ENCODE measurements at regions of chr1 and their contacts with region 1.

Region 1: DNA sequence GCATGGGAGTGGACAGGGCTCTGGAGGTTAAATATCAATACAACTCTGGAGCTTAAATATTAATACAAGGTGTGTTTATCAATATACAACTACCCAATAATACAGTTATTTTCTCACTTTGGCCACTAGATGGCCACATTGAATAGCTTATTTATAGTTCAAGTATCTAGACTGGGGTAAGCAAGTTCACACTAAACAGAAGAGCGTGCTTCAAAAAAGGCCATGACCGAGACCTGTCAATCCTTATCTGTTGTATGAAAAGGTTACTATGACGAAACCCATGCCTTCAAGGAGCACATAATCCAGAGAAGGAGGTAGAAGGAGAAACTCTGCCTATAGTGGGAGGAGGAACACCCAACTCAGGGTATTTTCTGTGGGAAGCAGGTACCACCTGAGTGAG is 29.1 kb downstream of the CHML start:
- DNase-seq: no peak
- H3K4me3 Mint-ChIP-seq: no peak overlapping the region
- H3K27ac Mint-ChIP-seq: no peak overlapping the region
- H3K4me1 Mint-ChIP-seq: peaks cover 14% of the 10 kb centered on the region
- H3K27me3 Mint-ChIP-seq: no peaks in the 10 kb centered on the region

Region 2: DNA sequence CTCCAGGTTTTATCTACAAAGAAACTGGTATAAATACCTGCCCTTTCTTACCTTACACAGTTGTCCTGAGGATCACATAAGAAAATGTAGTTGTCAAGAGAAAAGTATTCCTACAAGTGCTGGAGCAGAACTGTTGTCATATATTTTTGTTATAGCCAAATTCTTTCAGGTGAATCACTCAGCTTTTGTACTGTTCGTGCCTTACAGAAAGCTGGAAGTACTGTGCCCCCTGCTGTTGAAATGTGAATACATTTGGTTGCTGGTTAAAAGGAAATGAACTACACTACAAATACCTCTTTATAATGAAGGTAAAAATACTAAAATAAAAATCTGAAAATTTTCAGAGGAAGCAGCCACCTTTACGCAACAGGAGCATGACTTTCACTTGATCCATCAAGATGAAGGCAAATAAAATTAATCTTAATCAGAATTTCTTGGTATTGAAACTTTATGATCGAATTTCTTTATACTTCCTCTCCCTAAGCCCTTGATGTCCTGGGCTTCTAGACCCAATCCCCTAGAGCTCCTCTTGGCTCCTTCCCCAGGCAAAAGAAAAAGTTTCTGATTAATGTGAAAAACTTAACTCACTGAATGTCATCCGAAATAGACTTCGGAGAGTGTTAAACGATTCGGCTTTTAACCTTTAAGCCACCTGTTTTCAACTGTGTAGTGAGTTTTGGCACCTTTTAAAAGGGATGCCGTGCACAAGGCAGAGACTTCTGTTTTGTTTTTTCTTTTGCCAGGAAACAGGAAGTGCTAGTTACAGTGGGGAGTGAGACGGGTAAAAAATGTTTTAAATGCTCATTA is 16.6 kb after region 1 on chr1:
- intact Hi-C with region 1: loop called (anchors 1 kb)
- DNase-seq: peak; percentile 37
- H3K4me3 Mint-ChIP-seq: peak overlapping the region; percentile 77
- H3K27ac Mint-ChIP-seq: peak overlapping the region; percentile 76
- H3K4me1 Mint-ChIP-seq: peaks cover 25% of the 10 kb centered on the region
- H3K27me3 Mint-ChIP-seq: no peaks in the 10 kb centered on the region

Region 3: GRCh38 chr1:241847796-241848685 is 237.0 kb after region 1 on chr1 and contains the start of gene EXO1:
- intact Hi-C with region 1: loop called (anchors 1 kb)
- DNase-seq: peak; percentile 85
- H3K4me3 Mint-ChIP-seq: peak within 1 kb of the TSS; percentile 97
- H3K27ac Mint-ChIP-seq: peak within 1 kb of the TSS; percentile 98
- H3K4me1 Mint-ChIP-seq: peaks cover 36% of the 10 kb centered on the region
- H3K27me3 Mint-ChIP-seq: peaks cover 2% of the 10 kb centered on the region
- total RNA-seq, gene EXO1: 52.2 and 58.0 TPM in 2 replicates

Region 4: GRCh38 chr1:241998412-241998921 is 387.4 kb after region 1 on chr1:
- intact Hi-C with region 1: loop called (anchors 1 kb)
- DNase-seq: peak; percentile 23
- H3K4me3 Mint-ChIP-seq: peak overlapping the region; percentile 48
- H3K27ac Mint-ChIP-seq: no peak overlapping the region
- H3K4me1 Mint-ChIP-seq: peaks cover 4% of the 10 kb centered on the region
- H3K27me3 Mint-ChIP-seq: peaks cover 1% of the 10 kb centered on the region

Region 5: GRCh38 chr1:242055744-242056320 is 444.8 kb after region 1 on chr1:
- intact Hi-C with region 1: no loop called
- DNase-seq: no peak
- H3K4me3 Mint-ChIP-seq: no peak overlapping the region
- H3K27ac Mint-ChIP-seq: no peak overlapping the region
- H3K4me1 Mint-ChIP-seq: no peaks in the 10 kb centered on the region
- H3K27me3 Mint-ChIP-seq: no peaks in the 10 kb centered on the region